Lower leg skin (tissue), 4 donors: ENCODE measurements at regions of chr1 and their contacts with region 1.

Region 1: DNA sequence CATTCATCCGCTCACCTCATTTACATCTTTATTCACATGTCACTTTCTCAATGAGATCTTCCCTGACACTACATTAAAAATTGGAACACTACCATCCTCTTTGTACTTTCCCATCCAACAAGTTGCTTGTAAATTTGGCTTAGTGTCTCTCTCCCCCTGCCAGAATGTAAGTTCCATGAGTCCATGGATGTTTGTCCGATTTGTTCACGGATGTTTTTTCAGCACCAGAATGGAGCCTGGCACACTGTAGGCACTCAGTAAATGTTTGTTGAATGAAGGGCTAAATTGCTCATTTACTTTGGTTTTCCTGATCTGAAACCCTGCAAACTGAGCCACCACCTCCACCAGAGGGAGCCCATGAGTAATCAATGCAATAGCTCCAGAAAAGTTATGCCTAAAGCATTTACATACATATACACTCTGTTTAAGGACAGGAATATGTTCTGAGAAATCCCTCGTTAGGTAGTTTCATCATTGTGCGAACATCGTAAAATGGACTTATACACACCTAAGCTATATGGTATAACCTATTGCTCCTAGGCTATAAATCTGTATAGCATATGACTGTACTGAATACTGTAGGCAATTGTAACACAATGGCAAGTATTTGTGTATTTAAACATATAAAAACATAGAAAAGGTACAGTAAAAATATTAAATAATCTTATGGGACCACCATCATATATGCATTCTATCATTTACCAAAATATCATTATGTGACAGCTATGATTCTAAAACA is 2.8 kb upstream of the EYA3 start:
- DNase-seq: peak; percentile 57 to 91
- H3K4me3 ChIP-seq: no peak overlapping the region
- CTCF ChIP-seq: peak in 1 of 3 donors; percentile 41
- POLR2A ChIP-seq: no peak

Region 2: DNA sequence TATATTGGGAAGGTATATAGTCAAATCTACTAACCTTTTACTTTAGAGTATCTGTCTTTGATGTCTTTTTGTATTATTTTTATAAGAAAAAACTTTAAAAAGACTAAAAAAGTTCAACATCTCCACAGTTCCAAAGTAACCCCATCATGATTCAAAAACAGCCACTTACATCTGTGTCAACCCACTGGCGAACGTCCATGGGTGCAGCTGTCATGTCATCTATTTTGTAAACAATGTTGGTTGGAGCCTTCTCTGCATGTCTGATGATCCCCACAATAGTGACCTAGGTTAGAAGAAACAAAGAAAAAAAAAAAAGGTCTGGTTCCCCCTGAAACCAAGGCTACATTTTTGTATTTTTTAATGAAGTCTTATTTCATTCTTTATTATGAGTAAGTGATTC is 184.5 kb before region 1 on chr1:
- intact Hi-C with region 1: no loop called
- DNase-seq: peak in 1 of 2 donors; percentile 10
- H3K4me3 ChIP-seq: no peak overlapping the region
- CTCF ChIP-seq: no peak
- POLR2A ChIP-seq: no peak

Region 3: DNA sequence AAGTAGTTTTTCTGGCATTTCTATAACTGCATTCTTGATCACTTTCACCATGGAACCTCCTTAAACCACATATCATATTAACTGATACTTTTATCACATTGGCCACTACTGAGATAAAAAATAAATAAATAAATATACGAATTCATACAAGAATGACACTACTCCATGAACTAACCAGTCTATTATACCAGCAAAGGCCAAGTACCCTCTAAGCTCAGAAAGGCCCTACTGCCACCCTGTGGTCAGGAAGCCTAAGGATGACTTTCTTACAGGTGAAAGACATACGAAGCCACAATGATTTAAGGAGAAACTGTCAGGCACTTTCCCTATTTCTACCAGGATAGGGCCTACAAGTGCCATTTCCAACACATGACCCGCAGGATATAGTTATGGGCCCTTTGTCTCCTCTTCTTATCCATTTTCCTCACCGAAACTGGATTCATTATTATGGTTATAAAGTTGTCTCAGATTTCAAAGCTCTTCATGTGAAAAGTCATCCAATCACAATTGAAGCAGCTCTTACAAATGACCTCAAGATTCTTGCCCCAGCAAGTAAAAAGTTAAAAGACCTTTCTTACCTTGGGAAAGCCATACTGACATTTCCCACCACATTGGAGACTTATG is 117.7 kb after region 1 on chr1:
- intact Hi-C with region 1: loop called (anchors 10 kb)
- DNase-seq: no peak
- H3K4me3 ChIP-seq: no peak overlapping the region
- CTCF ChIP-seq: no peak
- POLR2A ChIP-seq: no peak

Region 4: DNA sequence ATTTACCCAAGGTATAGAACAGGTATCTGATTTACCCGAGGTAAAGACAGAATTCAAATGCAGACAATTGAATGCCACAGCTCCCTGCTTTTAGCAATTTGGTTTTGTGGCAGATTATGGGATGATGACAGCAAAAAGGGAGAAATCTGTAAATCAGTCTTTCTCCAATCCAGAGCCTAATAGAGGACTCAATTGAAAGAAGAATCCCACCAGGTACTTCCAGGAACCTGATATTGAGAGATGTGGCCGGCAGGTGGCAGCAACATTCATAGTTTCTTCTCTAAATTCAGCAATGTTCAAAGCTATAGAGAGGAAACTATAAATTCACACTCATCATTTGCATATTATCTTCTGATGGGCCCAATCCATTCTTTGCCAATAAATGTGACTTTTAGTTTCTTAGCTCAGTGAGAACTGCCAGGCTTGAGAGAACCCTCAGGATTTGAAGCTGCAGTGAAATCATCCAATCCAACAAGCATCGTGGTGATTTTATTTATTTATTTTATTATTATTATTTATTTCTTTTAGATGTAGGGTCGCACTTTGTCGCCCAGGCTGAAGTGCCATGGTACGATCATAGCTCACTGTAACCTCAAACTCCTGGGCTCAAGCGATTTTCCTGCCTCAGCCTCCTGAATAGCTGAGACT is 268.5 kb after region 1 on chr1:
- intact Hi-C with region 1: no loop called
- DNase-seq: peak; percentile 69 to 95
- H3K4me3 ChIP-seq: no peak overlapping the region
- CTCF ChIP-seq: peak in 1 of 3 donors; percentile 53
- POLR2A ChIP-seq: no peak